SK-N-SH (cell line): ENCODE measurements at regions of chr14 and their contacts with region 1.

Region 1: DNA sequence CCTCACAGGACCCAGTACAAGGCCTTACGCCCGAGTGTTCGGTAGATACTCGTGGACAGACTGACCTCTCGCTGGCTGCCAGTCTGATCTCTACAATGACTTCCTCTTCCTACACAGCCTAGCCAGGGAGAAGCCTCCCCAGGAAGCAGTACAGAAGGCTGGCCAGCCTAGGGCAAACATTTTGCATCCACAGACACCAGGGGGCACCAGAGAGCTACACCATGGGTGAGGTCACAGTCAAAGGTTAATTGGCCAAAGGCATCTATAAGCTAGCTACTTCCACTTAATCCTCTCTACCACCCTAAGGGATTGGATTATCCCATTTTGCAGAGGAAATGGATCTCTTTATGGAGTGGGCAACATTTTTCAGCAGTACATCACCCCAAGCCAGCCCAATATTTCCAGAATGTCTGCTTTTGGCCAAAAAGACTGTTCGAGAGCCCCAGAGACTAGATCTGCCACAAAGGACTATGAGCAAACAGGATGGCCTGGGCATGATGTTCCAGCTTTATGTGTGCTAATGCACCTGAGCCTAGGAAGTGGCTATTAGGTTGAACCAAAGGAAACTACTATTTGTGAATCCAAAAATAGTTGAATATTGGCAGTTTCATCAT is 14.6 kb upstream of the PNMA1 start:
- DNase-seq: peak; percentile 89
- H3K4me3 ChIP-seq: peak overlapping the region in 1 of 2 experiments; percentile 36; a peak in 1 of 4 replicates
- H3K27ac ChIP-seq: peak overlapping the region; percentile 13 to 53; a peak in 2 of 4 replicates
- H3K4me1 ChIP-seq: peaks cover under 1 to 20% of the 10 kb centered on the region in 2 experiments; a peak in 3 of 4 replicates
- H3K27me3 ChIP-seq: no peaks in the 10 kb centered on the region
- CTCF ChIP-seq: peak; percentile 85
- EP300 ChIP-seq: no peak
- RAD21 ChIP-seq: peak; percentile 95

Region 2: GRCh38 chr14:73714656-73715081 is 14.2 kb before region 1 on chr14:
- CTCF ChIA-PET with region 1: interaction called, 22 read pairs
- POLR2A ChIA-PET with region 1: interaction called, 4 read pairs
- DNase-seq: peak; percentile 75
- H3K4me3 ChIP-seq: peak overlapping the region; percentile 79 to 83
- H3K27ac ChIP-seq: peak overlapping the region; percentile 86 to 90
- H3K4me1 ChIP-seq: peaks cover 0 to 38% of the 10 kb centered on the region in 2 experiments; a peak in 3 of 4 replicates
- H3K27me3 ChIP-seq: no peaks in the 10 kb centered on the region
- CTCF ChIP-seq: no peak
- EP300 ChIP-seq: no peak
- RAD21 ChIP-seq: no peak

Region 3: DNA sequence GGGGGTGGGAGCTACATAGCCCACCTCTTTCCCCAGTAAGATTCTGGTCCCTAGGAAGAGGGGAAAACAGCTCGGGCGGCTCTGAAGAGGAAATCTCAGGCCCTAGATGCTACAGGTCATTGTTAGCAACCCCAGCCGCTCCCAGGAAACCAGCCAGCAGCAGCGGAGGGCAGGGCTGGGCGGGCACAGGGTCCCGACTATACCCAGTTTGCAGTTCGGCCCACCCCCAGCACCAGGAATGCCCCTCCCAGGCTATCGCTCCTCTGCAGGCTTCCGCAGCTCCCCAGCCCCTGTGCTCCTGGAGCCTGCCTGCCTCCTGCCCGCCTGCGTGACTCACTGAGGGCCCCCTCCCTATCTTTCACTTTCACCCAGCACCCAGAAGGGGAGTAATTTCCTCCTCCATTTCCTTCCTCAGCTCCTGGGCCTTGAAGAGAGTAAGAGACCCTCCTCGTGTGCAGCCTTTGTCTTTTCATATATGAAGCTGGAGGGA is 12.6 kb after region 1 on chr14:
- CTCF ChIA-PET with region 1: interaction called, 27 read pairs
- POLR2A ChIA-PET with region 1: no interaction called
- DNase-seq: peak; percentile 58
- H3K4me3 ChIP-seq: no peak overlapping the region
- H3K27ac ChIP-seq: peak overlapping the region; percentile 9 to 20; a peak in 3 of 4 replicates
- H3K4me1 ChIP-seq: peaks cover 28 to 67% of the 10 kb centered on the region in 2 experiments; a peak in 3 of 4 replicates
- H3K27me3 ChIP-seq: no peaks in the 10 kb centered on the region
- CTCF ChIP-seq: no peak
- EP300 ChIP-seq: no peak
- RAD21 ChIP-seq: no peak

Region 4: DNA sequence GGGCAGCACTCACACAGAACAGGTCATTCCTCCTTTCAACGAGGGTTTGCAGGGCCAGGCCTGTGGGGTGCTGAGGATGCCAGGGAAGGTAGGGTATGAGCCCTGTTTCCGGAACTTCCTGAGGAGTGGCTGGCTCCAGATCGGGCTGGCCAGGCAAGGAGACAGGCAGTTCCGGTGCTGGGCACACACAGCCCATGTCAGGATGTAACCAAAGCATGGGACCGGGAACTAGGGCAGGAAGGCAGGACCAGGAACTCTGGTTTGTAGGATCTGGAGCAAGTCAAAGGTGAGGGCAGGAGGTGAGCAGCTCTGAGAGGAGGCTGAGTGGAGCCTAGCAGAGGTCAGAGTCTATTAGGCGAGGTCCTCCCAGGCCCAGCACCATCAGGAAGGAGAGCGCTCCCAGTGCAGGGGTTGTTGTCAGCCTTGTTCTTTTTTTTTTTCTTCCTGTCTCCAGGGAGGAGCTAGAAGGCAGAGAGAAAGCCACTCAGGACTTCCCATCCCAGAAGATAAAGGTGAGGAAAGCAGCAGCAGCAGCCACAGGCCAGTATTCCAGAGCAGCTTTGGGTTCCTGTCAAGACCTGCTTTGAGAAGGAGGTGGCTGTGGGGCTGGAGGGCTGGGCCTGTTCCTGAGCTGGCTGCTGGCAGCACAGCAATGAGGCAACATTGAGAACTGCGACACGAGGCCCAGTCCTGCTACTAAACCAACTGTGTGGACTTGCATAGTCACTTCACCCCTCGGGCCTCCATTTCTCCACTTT is 73.8 kb after region 1 on chr14:
- CTCF ChIA-PET with region 1: interaction called, 11 read pairs
- POLR2A ChIA-PET with region 1: interaction called, 3 read pairs
- DNase-seq: no peak
- H3K4me3 ChIP-seq: no peak overlapping the region
- H3K27ac ChIP-seq: no peak overlapping the region
- H3K4me1 ChIP-seq: no peaks in the 10 kb centered on the region
- H3K27me3 ChIP-seq: no peaks in the 10 kb centered on the region
- CTCF ChIP-seq: no peak
- EP300 ChIP-seq: no peak
- RAD21 ChIP-seq: no peak

Region 5: GRCh38 chr14:73816393-73816816 is 87.6 kb after region 1 on chr14:
- CTCF ChIA-PET with region 1: interaction called, 10 read pairs
- POLR2A ChIA-PET with region 1: no interaction called
- DNase-seq: no peak
- H3K4me3 ChIP-seq: no peak overlapping the region
- H3K27ac ChIP-seq: no peak overlapping the region
- H3K4me1 ChIP-seq: no peaks in the 10 kb centered on the region
- H3K27me3 ChIP-seq: 0 out of 2 replicates have a peak, but pooled peaks cover 7% of the 10 kb centered on the region
- CTCF ChIP-seq: no peak
- EP300 ChIP-seq: no peak
- RAD21 ChIP-seq: no peak

Region 6: DNA sequence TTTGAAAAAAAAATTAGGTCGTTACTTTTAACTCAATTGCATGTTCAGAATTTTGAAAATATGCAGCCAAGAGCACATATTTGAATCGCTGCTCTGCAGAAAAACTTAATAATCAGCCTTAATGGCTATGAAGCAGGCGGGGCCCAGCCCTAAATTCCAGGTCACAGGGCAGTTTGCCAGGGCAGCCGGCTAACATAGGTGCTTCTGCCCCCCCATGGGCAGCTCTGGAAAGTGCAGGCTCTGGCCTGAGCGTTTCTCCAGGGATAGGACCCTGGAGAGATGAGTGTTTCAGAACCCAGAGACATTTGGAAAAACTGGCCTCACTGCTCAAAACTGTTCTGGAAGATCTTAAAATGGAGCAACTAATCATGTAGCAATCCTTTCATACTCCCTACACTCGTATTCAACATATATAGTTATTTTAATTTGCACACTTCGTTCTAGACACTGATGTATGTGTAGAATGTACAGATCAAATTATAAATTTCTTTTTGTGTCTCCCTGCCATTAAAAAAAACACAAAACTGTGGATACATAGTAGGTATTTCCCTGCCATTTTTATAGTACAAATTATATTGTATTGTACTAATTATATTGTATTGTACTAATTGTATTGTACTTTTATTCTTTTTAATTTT is 96.8 kb after region 1 on chr14:
- CTCF ChIA-PET with region 1: interaction called, 70 read pairs
- POLR2A ChIA-PET with region 1: no interaction called
- DNase-seq: peak; percentile 90
- H3K4me3 ChIP-seq: peak overlapping the region in 1 of 2 experiments; percentile 27; a peak in 1 of 4 replicates
- H3K27ac ChIP-seq: no peak overlapping the region; a peak in 1 of 4 replicates
- H3K4me1 ChIP-seq: peaks cover 0 to 3% of the 10 kb centered on the region in 2 experiments; a peak in 1 of 4 replicates
- H3K27me3 ChIP-seq: no peaks in the 10 kb centered on the region
- CTCF ChIP-seq: peak; percentile 93
- EP300 ChIP-seq: no peak
- RAD21 ChIP-seq: peak; percentile 94